Activated CD4-positive, alpha-beta memory T cell treated with anti-CD3 and anti-CD28 coated beads for 36 hours (primary cell): ENCODE measurements at regions of chr2 and their contacts with region 1.

Region 1: GRCh38 chr2:99348173-99348572 is 11.0 kb downstream of the EIF5B start:
- DNase-seq: peak; percentile 28
- H3K4me3 Mint-ChIP-seq: peak overlapping the region; percentile 1
- H3K27ac Mint-ChIP-seq: peak overlapping the region; percentile 55
- H3K4me1 Mint-ChIP-seq: peaks cover 57% of the 10 kb centered on the region
- H3K27me3 Mint-ChIP-seq: no peaks in the 10 kb centered on the region

Region 2: GRCh38 chr2:99377879-99378278 is 29.7 kb after region 1 on chr2:
- CTCF ChIA-PET with region 1: no interaction called
- POLR2A ChIA-PET with region 1: no interaction called
- intact Hi-C with region 1: loop called (anchors 1 kb)
- DNase-seq: no peak
- H3K4me3 Mint-ChIP-seq: no peak overlapping the region
- H3K27ac Mint-ChIP-seq: peak overlapping the region; percentile 67
- H3K4me1 Mint-ChIP-seq: peaks cover 35% of the 10 kb centered on the region
- H3K27me3 Mint-ChIP-seq: no peaks in the 10 kb centered on the region